Motor neuron (in vitro differentiated cells): ENCODE measurements at regions of chr6 and their contacts with region 1.

Region 1: GRCh38 chr6:155327326-155328073 is 13.2 kb upstream of the TFB1M start:
- ATAC-seq: peak in 7 of 8 experiments; percentile 24 to 72 (median 51)
- H3K4me3 ChIP-seq: no peak overlapping the region
- H3K27ac ChIP-seq: no peak overlapping the region
- H3K4me1 ChIP-seq: no peaks in the 10 kb centered on the region

Region 2: GRCh38 chr6:155493694-155494143 is 166.2 kb after region 1 on chr6:
- in situ Hi-C with region 1: loop called in 3 of 9 experiments (anchors 25 kb)
- ATAC-seq: peak in 4 of 8 experiments; percentile 40 to 99 (median 98)
- H3K4me3 ChIP-seq: no peak overlapping the region
- H3K27ac ChIP-seq: no peak overlapping the region
- H3K4me1 ChIP-seq: peaks cover 0 to 4% of the 10 kb centered on the region in 2 donors

Region 3: GRCh38 chr6:155530219-155530834 is 202.8 kb after region 1 on chr6:
- in situ Hi-C with region 1: loop called in 2 of 9 experiments (anchors 25 kb)
- ATAC-seq: peak in 3 of 8 experiments; percentile 39 to 56 (median 47)
- H3K4me3 ChIP-seq: no peak overlapping the region
- H3K27ac ChIP-seq: no peak overlapping the region
- H3K4me1 ChIP-seq: peaks cover 2 to 5% of the 10 kb centered on the region in 2 donors

Region 4: DNA sequence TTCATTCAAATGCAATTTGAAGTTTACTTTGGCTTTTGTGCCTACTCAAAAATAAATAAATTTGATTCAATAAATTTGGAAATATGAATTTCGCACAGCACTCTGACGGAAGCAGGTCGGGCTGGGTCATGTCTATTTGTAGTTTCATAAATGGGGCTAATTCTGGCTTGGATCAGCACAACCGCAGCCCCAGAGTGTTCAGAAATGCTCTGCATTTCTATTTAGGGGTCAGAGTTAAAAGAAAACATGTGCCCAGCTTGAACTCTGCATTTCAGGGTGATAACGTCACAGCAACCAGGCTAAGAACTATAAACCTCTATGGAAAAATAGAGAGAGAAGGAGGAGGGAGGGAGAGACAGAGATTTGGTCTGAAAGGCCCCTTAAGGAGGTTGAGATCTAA is 609.1 kb after region 1 on chr6:
- in situ Hi-C with region 1: loop called in 1 of 9 experiments (anchors 25 kb)
- ATAC-seq: peak in 1 of 8 experiments; percentile 46
- H3K4me3 ChIP-seq: no peak overlapping the region
- H3K27ac ChIP-seq: no peak overlapping the region
- H3K4me1 ChIP-seq: peaks cover 4 to 9% of the 10 kb centered on the region in 2 donors